CD8-positive, alpha-beta memory T cell (primary cell): ENCODE measurements at regions of chr5 and their contacts with region 1.

Region 1: DNA sequence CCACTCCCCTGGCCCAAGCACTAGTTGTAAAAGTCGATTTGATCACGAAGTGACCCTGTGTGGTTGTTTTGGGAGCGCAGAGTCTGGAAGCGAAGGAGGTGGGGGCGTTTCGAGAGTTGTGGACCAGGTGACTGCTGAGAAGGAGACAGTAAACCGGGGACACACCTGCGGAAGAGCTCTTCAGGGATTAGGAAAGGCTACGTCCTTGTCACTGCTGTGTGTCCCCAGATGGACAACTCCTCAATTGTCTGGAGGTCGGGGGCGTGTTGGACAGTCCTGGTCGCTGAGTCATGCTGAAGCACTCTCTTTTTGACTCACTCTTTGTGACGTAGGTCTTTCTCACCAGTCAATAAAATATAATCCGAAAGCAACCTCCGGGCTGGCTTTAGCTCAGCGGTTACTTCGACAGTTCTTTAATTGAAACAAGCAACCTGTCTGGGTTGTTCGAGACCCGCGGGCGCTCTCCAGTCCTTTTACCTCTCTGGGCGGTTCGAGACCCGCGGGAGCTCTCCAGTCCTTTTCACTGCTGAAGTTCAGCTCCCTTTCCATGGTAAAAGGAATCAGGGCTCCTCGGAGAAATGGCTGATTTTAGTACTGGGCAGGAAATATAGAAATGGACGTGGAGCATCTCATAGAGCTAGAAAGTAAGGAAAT is 10.8 kb downstream of the ZMAT2 start:
- DNase-seq: peak; percentile 63 to 92 (median 90)
- H3K4me3 ChIP-seq: peak overlapping the region; percentile 100
- H3K4me3 Mint-ChIP-seq: peak overlapping the region; percentile 92 to 100 (median 99)
- H3K27ac ChIP-seq: peak overlapping the region; percentile 97
- H3K27ac Mint-ChIP-seq: peak overlapping the region; percentile 97 to 99 (median 99)
- H3K4me1 ChIP-seq: peaks cover 9% of the 10 kb centered on the region
- H3K4me1 Mint-ChIP-seq: peaks cover 19 to 25% (median 21%) of the 10 kb centered on the region in 3 donors
- H3K27me3 ChIP-seq: no peaks in the 10 kb centered on the region
- H3K27me3 Mint-ChIP-seq: peaks cover 0 to 8% of the 10 kb centered on the region in 2 donors

Region 2: DNA sequence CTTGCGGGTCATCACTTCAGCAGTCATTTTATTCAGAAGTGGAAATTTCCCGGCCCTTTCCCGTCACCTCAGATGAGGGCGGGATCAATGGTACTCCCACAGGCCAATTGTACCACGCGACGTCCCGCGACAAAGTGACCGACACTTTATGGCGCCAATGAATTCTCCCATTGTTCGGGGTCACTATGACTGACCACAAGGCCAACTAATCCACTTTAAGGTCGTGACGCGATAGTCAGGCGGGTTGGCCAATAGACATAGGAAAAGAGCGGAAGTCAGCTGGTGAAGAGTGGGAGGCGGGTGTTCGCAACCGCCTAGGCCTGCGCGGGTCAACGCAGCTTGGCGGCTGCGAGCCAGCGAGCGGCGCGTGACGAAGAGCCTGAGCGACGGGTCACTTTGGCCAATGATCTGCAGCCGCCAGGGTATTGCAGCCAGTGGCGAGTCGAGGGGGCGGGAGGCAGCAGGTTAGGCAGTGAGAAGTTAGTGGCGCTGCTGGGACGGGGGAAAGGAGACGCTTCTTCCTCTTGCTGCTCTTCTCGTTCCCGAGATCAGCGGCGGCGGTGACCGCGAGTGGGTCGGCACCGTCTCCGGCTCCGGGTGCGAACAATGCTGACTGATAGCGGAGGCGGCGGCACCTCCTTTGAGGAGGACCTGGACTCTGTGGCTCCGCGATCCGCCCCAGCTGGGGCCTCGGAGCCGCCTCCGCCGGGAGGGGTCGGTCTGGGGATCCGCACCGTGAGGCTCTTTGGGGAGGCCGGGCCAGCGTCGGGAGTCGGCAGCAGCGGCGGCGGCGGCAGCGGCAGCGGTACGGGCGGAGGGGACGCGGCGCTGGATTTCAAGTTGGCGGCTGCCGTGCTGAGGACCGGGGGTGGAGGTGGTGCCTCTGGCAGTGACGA is 309.4 kb before region 1 on chr5 and contains the start of gene ANKHD1:
- CTCF ChIA-PET with region 1: interaction called, 7 read pairs
- POLR2A ChIA-PET with region 1: interaction called, 11 read pairs
- DNase-seq: peak; percentile 93 to 99 (median 98)
- H3K4me3 ChIP-seq: peak within 1 kb of the TSS; percentile 90
- H3K4me3 Mint-ChIP-seq: no peak within 1 kb of the TSS
- H3K27ac ChIP-seq: peak within 1 kb of the TSS; percentile 93
- H3K27ac Mint-ChIP-seq: peak within 1 kb of the TSS in 1 of 8 donors; percentile 90
- H3K4me1 ChIP-seq: peaks cover 44% of the 10 kb centered on the region
- H3K4me1 Mint-ChIP-seq: peaks cover 37 to 43% (median 41%) of the 10 kb centered on the region in 3 donors
- H3K27me3 ChIP-seq: no peaks in the 10 kb centered on the region
- H3K27me3 Mint-ChIP-seq: peaks cover 0 to 2% of the 10 kb centered on the region in 2 donors
- total RNA-seq, gene ANKHD1: 100 to 107 TPM

Region 3: DNA sequence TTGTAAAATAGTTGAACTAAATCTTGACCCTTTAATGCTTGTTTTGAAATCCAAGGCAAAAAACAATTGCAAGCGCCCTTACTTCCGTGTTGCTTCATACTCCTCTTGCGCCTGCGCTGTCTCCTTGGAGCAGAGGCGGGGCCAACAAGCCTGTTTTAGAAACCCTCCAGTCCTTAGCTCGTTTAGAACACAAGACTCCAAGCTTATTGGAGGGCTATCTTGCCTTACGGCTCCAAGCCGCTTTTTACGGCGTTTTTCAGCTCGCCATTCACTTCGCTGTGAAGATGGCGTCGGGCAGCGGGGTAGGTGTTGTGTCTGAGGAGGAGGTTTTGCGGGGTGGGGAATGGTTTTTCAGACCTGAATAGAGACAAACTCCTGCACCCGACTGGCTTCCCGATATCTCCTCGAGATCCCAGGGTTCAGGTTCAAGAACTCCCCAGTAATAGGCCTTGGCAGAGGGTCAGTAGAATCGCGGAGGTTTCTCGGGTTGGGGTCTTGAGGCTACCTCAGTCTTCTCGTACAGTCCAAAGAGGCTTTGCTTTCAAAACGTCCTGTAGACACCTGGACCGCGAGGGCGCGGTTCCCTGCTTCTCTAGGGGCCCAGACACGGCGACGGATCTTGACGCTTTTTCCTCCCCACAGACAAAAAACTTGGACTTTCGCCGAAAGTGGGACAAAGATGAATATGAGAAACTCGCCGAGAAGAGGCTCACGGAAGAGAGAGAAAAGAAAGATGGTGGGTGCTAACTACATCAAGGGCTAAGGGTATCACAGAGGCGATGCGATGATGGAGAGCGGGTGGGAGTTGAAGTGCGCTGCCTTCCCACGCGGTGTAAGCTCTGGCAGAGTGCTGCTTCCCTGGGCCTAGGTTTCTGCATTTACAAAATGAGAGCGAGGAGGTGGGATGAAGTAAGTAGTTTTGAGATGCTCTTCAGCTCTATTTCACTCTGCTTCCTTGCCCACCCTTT is 10.6 kb before region 1 on chr5 and contains the start of gene ZMAT2:
- CTCF ChIA-PET with region 1: interaction called, 14 read pairs
- POLR2A ChIA-PET with region 1: interaction called, 12 read pairs
- DNase-seq: peak; percentile 87 to 96 (median 92)
- H3K4me3 ChIP-seq: peak within 1 kb of the TSS; percentile 88
- H3K4me3 Mint-ChIP-seq: peak within 1 kb of the TSS; percentile 94 to 99 (median 98)
- H3K27ac ChIP-seq: peak within 1 kb of the TSS; percentile 80
- H3K27ac Mint-ChIP-seq: peak within 1 kb of the TSS; percentile 82 to 99 (median 97)
- H3K4me1 ChIP-seq: peaks cover 19% of the 10 kb centered on the region
- H3K4me1 Mint-ChIP-seq: peaks cover 20 to 31% (median 29%) of the 10 kb centered on the region in 3 donors
- H3K27me3 ChIP-seq: no peaks in the 10 kb centered on the region
- H3K27me3 Mint-ChIP-seq: no peaks in the 10 kb centered on the region
- total RNA-seq, gene ZMAT2: 71.2 to 75.2 TPM